A673 (cell line): ENCODE measurements at regions of chr5 and their contacts with region 1.

Region 1: DNA sequence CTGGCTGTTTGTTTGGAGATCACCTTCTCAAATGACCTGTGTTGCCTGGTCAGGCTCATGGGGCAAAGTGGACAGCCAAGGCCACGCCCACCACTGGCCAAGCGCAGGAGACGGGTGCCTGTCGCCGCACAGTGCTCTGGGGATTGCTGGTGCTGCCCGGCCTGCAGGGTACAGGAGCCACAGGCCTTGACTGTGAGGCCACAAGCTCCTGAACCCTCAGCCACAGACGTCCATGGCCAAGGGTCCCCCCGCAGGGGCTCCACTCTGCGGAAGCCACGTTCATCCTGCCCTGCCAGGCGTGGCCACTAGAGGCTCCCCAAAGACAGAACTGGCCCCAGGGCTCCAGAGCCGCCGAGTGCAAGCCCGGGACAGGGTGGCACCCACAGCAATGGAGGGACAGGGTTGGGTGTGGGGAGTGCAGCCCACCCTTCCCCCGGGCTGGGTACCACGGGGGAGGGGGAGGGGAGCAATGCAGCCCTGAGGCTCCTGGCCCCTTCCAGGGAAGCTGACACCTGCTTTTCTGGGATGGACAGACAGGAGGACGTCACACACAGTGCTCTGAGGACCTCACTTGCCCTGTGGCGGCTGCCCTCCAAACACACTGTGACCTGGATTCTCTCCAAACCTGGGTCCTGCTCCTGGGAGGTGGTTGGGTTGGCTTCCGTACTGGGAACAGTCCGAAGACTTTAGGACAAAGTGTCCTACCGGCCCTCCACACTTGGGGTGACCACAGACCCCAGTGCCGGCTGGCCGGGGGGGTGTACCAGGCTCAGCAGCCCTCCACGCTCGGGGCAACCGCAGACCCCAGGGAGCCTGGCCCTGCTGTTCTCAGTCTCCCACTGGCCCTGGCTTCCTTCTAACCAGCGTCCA is 21.5 kb downstream of the TPPP start:
- DNase-seq: peak; percentile 85
- H3K4me3 ChIP-seq: no peak overlapping the region
- H3K27ac ChIP-seq: no peak overlapping the region
- H3K4me1 ChIP-seq: peaks cover 19% of the 10 kb centered on the region
- H3K27me3 ChIP-seq: peaks cover 6% of the 10 kb centered on the region
- CTCF ChIP-seq: peak; percentile 88

Region 2: GRCh38 chr5:746258-746761 is 74.6 kb after region 1 on chr5:
- CTCF ChIA-PET with region 1: no interaction called
- POLR2A ChIA-PET with region 1: no interaction called
- intact Hi-C with region 1: no loop called
- DNase-seq: no peak
- H3K4me3 ChIP-seq: no peak overlapping the region
- H3K27ac ChIP-seq: no peak overlapping the region
- H3K4me1 ChIP-seq: no peaks in the 10 kb centered on the region
- H3K27me3 ChIP-seq: no peaks in the 10 kb centered on the region
- CTCF ChIP-seq: no peak

Region 3: DNA sequence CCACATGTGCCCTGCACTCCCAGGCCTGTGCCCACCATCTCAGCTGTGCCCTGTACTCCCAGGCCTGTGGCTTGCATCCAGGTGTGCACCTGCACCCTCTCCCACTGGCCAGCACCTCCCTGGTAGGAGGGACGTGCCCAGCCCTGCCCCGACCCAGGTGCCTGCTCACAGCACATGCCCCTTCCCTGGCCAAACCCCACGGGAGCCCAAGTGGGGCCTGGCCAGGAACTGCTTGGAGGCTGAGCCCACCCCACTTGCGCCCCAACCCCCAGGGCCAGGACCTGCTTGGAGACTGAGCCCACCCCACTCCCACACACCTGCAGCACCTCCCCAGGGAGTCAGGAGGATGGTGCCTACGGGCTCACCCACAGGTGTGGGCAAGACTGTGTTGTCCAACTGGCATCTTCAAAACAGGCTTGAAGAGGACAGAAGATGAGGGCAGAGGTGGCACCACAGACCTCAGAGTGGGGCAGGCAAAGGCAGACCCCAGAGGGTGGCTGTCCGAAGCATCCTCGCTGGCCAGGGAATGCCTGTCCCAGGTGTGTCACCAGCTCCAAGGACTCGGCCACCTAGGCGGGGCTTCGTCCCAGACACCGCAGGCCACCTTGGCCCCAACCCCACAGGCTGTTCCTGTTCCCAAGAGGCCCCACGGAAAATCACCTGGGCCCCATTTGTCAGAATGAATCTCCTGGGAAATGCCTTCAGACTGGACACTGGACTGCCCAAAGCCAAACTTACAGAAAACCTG is 102.0 kb after region 1 on chr5:
- CTCF ChIA-PET with region 1: no interaction called
- POLR2A ChIA-PET with region 1: no interaction called
- intact Hi-C with region 1: no loop called
- DNase-seq: no peak
- H3K4me3 ChIP-seq: no peak overlapping the region
- H3K27ac ChIP-seq: no peak overlapping the region
- H3K4me1 ChIP-seq: no peaks in the 10 kb centered on the region
- H3K27me3 ChIP-seq: no peaks in the 10 kb centered on the region
- CTCF ChIP-seq: no peak

Region 4: DNA sequence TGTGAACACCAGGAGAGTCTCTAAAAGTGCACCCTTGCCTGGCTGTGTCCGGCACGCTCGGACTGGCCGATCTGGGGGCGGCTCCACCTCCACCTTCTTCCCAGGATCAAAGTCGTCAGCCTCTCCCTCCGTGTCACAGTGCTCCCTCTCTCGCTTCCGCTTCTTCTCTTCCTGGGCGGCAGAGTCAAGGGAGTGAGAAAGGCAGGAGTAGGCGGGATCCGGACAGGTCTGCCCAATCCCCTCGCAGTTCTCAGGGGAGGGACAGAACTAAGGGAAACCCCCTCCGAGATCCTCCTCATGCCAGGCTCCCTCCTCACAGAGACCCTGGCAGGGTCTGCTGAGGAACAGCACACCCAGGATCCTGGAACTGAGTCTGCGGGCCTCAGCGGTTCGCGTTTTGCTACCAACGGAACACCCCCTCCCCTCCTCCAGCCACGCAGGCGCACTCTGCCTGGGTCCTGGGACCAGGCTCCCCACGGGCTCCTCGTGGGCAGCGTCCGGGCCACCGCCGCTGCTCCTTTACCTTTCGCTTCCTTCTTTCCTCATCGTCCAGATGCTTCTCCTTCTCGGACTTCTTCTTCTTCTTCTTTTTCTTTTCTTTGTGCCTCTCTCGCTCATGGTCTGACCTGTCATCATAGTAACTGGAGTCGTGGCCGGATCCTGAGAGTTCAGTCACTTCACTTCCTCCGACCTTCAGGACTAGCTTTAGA is 219.6 kb after region 1 on chr5:
- CTCF ChIA-PET with region 1: no interaction called
- POLR2A ChIA-PET with region 1: no interaction called
- intact Hi-C with region 1: no loop called
- DNase-seq: peak; percentile 84
- H3K4me3 ChIP-seq: peak overlapping the region; percentile 87
- H3K27ac ChIP-seq: peak overlapping the region; percentile 98
- H3K4me1 ChIP-seq: no peaks in the 10 kb centered on the region
- H3K27me3 ChIP-seq: no peaks in the 10 kb centered on the region
- CTCF ChIP-seq: no peak

Region 5: DNA sequence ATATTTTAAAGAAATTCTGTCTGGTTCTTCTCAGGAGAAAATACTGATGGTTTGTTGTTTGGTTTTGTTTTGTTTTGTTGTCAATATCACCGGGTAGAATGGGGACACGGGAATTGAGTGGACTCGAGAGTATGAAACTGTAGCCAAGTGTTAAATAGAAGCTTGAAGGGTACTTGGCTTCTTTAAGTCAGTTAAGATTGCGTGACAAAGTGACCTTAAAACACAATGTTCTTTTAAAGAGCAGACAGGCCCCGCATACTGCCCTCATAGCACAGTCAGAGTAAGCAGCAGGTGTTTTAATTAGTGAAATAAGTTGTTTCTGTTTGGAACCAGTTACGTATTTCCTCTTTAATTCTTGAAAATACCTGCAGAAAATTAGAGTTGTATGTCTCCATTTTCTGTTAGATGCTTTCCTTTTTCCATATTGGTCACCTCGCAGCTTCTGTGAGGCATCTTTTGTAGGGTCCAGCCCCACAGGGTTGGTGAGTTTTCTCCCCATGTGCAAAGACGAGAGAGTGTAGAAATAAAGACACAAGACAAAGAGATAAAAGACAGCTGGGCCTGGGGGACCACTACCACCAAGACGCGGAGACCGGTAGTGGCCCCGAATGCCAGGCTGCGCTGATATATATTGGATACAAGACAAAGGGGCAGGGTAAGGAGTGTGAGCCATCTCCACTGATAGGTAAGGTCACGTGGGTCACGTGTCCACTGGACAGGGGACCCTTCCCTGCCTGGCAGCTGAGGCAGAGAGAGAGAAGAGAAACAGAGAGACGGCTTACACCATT is 230.6 kb after region 1 on chr5:
- CTCF ChIA-PET with region 1: no interaction called
- POLR2A ChIA-PET with region 1: no interaction called
- intact Hi-C with region 1: loop called (anchors 2 kb)
- DNase-seq: no peak
- H3K4me3 ChIP-seq: no peak overlapping the region
- H3K27ac ChIP-seq: no peak overlapping the region
- H3K4me1 ChIP-seq: no peaks in the 10 kb centered on the region
- H3K27me3 ChIP-seq: no peaks in the 10 kb centered on the region
- CTCF ChIP-seq: no peak

Region 6: DNA sequence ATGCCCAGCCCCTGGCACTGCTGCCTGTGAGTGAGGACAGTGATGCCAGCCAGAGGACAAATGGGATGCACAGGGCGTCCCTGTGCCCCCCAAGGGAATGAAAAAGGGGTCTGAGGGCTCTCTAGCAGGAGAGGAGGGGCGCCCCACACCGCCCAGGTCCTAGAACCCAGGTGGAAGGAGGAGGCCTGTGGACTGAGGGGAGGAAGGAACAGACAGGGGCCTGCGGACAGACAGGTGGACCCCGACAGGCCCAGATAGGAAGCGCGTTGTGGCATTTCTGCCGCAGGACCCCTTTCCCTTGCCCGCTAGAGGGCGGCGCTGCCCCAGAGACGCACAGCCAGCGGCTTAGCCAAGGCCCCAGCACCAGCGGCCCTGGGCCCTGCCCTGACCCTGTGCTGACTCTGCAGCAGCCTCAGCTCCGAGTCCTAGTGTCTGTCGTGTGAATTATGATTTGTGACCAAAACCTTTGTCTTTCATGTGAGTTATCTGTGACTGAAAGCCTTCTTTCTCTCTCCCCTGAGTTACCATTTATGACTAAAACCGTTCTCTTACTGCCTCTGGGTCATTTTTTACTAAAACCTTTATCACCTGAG is 251.7 kb after region 1 on chr5:
- CTCF ChIA-PET with region 1: no interaction called
- POLR2A ChIA-PET with region 1: no interaction called
- intact Hi-C with region 1: no loop called
- DNase-seq: peak; percentile 76
- H3K4me3 ChIP-seq: no peak overlapping the region
- H3K27ac ChIP-seq: no peak overlapping the region
- H3K4me1 ChIP-seq: no peaks in the 10 kb centered on the region
- H3K27me3 ChIP-seq: peaks cover 2% of the 10 kb centered on the region
- CTCF ChIP-seq: peak; percentile 92